ENCODE measurements at regions of chr14 and their contacts with region 1.

Region 1: GRCh38 chr14:37969511-37969979 is 238.2 kb upstream of the SSTR1 start:
- DNase-seq: peak; percentile 80 to 91
- H3K4me3 ChIP-seq: no peak overlapping the region
- H3K4me3 Mint-ChIP-seq: no peak overlapping the region
- H3K27ac Mint-ChIP-seq: no peak overlapping the region
- H3K4me1 ChIP-seq: peaks cover 32% of the 10 kb centered on the region
- H3K4me1 Mint-ChIP-seq: peaks cover 13% of the 10 kb centered on the region
- H3K27me3 ChIP-seq: no peaks in the 10 kb centered on the region
- H3K27me3 Mint-ChIP-seq: no peaks in the 10 kb centered on the region
- CTCF ChIP-seq: no peak

Region 2: DNA sequence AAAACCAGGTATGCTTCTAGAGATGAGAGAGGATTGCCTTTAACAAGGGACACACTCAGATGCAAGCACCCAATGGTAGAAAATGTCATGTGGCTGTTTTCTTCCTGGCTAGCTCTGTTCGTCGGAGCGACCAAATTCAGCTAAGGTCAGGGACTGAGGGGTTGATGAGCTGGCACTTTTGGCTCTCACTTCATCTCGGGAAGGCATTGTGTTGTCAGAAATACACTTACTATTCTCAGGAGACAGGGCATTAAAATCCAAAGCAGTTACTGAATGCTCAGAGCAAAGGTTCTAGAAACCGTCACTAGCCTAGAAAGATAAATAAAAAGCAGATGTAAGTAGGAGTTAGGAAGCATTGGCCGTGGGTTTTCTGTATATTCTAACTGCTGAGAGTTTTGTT is 37.5 kb before region 1 on chr14:
- CTCF ChIA-PET with region 1: no interaction called
- POLR2A ChIA-PET with region 1: no interaction called
- intact Hi-C with region 1: loop called (anchors 1 kb)
- DNase-seq: no peak
- H3K4me3 ChIP-seq: no peak overlapping the region
- H3K4me3 Mint-ChIP-seq: no peak overlapping the region
- H3K27ac Mint-ChIP-seq: no peak overlapping the region
- H3K4me1 ChIP-seq: no peaks in the 10 kb centered on the region
- H3K4me1 Mint-ChIP-seq: peaks cover 5% of the 10 kb centered on the region
- H3K27me3 ChIP-seq: no peaks in the 10 kb centered on the region
- H3K27me3 Mint-ChIP-seq: no peaks in the 10 kb centered on the region
- CTCF ChIP-seq: no peak

Region 3: GRCh38 chr14:37936931-37937522 is 32.5 kb before region 1 on chr14:
- CTCF ChIA-PET with region 1: no interaction called
- POLR2A ChIA-PET with region 1: no interaction called
- intact Hi-C with region 1: loop called (anchors 1 kb)
- DNase-seq: peak in 1 of 2 experiments; percentile 8
- H3K4me3 ChIP-seq: no peak overlapping the region
- H3K4me3 Mint-ChIP-seq: no peak overlapping the region
- H3K27ac Mint-ChIP-seq: peak overlapping the region; percentile 12
- H3K4me1 ChIP-seq: no peaks in the 10 kb centered on the region
- H3K4me1 Mint-ChIP-seq: peaks cover 6% of the 10 kb centered on the region
- H3K27me3 ChIP-seq: no peaks in the 10 kb centered on the region
- H3K27me3 Mint-ChIP-seq: no peaks in the 10 kb centered on the region
- CTCF ChIP-seq: no peak

Region 4: GRCh38 chr14:38016497-38016896 is 47.0 kb after region 1 on chr14:
- CTCF ChIA-PET with region 1: no interaction called
- POLR2A ChIA-PET with region 1: no interaction called
- intact Hi-C with region 1: no loop called
- DNase-seq: peak in 1 of 2 experiments; percentile 11
- H3K4me3 ChIP-seq: no peak overlapping the region
- H3K4me3 Mint-ChIP-seq: no peak overlapping the region
- H3K27ac Mint-ChIP-seq: no peak overlapping the region
- H3K4me1 ChIP-seq: no peaks in the 10 kb centered on the region
- H3K4me1 Mint-ChIP-seq: no peaks in the 10 kb centered on the region
- H3K27me3 ChIP-seq: no peaks in the 10 kb centered on the region
- H3K27me3 Mint-ChIP-seq: peaks cover 2% of the 10 kb centered on the region
- CTCF ChIP-seq: peak; percentile 36 to 40

Region 5: GRCh38 chr14:38208618-38209562 is 239.3 kb after region 1 on chr14:
- CTCF ChIA-PET with region 1: interaction called, 3 read pairs
- POLR2A ChIA-PET with region 1: interaction called, 7 read pairs
- intact Hi-C with region 1: loop called (anchors 5 kb)
- DNase-seq: peak; percentile 85 to 88
- H3K4me3 ChIP-seq: peak overlapping the region; percentile 49
- H3K4me3 Mint-ChIP-seq: peak overlapping the region; percentile 94
- H3K27ac Mint-ChIP-seq: peak overlapping the region; percentile 86
- H3K4me1 ChIP-seq: peaks cover 6% of the 10 kb centered on the region
- H3K4me1 Mint-ChIP-seq: peaks cover 12% of the 10 kb centered on the region
- H3K27me3 ChIP-seq: no peaks in the 10 kb centered on the region
- H3K27me3 Mint-ChIP-seq: no peaks in the 10 kb centered on the region
- CTCF ChIP-seq: peak in 1 of 2 experiments; percentile 35

Region 6: DNA sequence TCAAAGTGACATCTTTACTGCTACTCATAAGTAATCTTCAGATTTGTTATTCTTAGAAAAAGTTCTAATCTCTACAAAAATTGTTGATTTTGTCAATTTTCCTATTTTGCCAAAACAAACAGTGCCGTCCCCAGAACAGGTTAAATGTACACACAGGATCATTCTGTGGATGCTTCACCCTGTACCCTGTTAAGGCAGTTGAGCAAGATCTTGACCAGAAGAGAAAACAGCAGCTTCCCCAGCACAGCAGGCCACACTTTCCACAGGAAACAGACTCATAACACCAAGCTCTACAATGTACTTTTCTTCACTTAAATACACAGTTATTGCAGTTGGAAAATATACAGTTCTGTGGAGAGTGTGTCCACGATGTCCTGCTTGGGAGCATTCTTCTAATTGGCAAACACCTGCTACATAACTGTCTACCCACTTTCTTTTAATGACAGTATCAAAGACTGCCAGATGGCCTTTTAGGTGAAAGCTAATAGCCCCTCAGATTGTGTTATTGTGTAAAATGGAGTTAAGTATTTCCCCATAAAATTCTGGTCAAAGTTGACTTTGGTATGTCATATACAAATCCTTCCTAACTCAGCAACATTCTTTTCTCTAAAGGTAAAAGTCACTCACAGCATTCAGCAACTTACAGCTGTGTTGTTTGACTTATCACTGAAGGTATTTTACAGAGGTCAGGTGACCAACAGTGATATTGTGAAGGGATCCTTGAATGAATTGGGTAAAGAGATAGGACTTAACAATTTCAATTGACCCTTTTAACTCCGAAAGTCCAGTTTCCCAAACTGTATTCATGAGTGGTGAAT is 1056.5 kb after region 1 on chr14:
- CTCF ChIA-PET with region 1: no interaction called
- POLR2A ChIA-PET with region 1: no interaction called
- intact Hi-C with region 1: loop called (anchors 10 kb)
- DNase-seq: peak; percentile 53 to 59
- H3K4me3 ChIP-seq: no peak overlapping the region
- H3K4me3 Mint-ChIP-seq: peak overlapping the region; percentile 48
- H3K27ac Mint-ChIP-seq: peak overlapping the region; percentile 79
- H3K4me1 ChIP-seq: peaks cover 38% of the 10 kb centered on the region
- H3K4me1 Mint-ChIP-seq: peaks cover 51% of the 10 kb centered on the region
- H3K27me3 ChIP-seq: no peaks in the 10 kb centered on the region
- H3K27me3 Mint-ChIP-seq: no peaks in the 10 kb centered on the region
- CTCF ChIP-seq: no peak

Measured in Caco-2 (cell line).